ENCODE measurements at regions of chr7 and their contacts with region 1.

Region 1: GRCh38 chr7:103317016-103317415 is 19.8 kb downstream of the PMPCB start:
- DNase-seq: no peak
- ATAC-seq: no peak
- H3K4me3 ChIP-seq: no peak overlapping the region
- H3K27ac ChIP-seq: no peak overlapping the region
- H3K4me1 ChIP-seq: no peaks in the 10 kb centered on the region
- H3K27me3 ChIP-seq: no peaks in the 10 kb centered on the region
- CTCF ChIP-seq: no peak

Region 2: GRCh38 chr7:103369430-103369829 is 52.4 kb after region 1 on chr7:
- intact Hi-C with region 1: loop called in 1 of 3 experiments (anchors 10 kb)
- DNase-seq: no peak
- ATAC-seq: no peak
- H3K4me3 ChIP-seq: no peak overlapping the region
- H3K27ac ChIP-seq: no peak overlapping the region
- H3K4me1 ChIP-seq: no peaks in the 10 kb centered on the region
- H3K27me3 ChIP-seq: no peaks in the 10 kb centered on the region
- CTCF ChIP-seq: no peak

Region 3: DNA sequence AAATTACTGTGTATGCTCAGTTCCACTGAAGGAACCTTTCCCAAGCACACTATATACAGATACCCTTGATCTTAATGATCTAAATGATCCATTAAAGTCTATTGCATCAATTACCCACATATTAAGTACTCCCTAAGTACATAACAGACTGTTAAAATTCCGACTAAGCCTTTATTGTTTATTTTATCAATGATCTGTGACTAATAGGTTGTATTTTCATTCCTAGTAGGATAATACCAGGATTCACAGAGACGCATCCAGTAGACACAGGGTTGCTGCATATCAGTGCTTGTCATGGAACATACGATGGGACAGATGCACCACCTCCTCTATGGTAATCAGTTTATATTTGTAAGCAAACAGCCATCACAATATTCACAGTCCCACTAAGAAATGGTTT is 288.6 kb after region 1 on chr7:
- intact Hi-C with region 1: no loop called
- DNase-seq: no peak
- ATAC-seq: no peak
- H3K4me3 ChIP-seq: no peak overlapping the region
- H3K27ac ChIP-seq: no peak overlapping the region
- H3K4me1 ChIP-seq: peaks cover 0 to 10% (median 5%) of the 10 kb centered on the region in 3 donors
- H3K27me3 ChIP-seq: no peaks in the 10 kb centered on the region
- CTCF ChIP-seq: no peak

Measured in pancreas (tissue), 10 donors.